ENCODE measurements at regions of chr1 and their contacts with region 1.

Region 1: DNA sequence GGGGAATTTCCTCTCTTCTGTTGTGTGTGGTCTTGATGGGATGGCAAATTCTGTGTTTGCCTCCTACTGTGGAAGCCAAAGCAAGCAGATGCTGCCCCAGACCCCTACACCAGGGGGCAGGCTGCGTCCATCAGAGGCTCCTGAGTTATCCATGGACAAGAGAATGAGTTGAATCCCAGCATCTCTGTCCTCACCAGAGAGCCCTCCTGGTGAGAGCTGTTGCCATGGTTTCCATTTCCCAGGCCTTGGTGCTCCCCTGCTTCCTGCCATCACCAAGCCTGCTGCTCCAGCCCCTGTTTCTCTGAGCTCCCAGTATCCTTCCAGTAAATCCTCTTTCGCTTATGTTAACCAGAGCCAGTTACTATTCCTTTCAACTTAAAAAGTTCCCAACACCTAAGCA is 20.4 kb upstream of the GNG12 start:
- DNase-seq: peak; percentile 57
- ATAC-seq: peak; percentile 60
- H3K4me3 Mint-ChIP-seq: no peak overlapping the region
- H3K27ac Mint-ChIP-seq: no peak overlapping the region
- H3K4me1 Mint-ChIP-seq: no peaks in the 10 kb centered on the region
- H3K27me3 Mint-ChIP-seq: peaks cover 14% of the 10 kb centered on the region

Region 2: GRCh38 chr1:68010090-68010489 is 156.4 kb after region 1 on chr1:
- CTCF ChIA-PET with region 1: no interaction called
- POLR2A ChIA-PET with region 1: no interaction called
- intact Hi-C with region 1: loop called (anchors 1 to 10 kb)
- DNase-seq: no peak
- ATAC-seq: no peak
- H3K4me3 Mint-ChIP-seq: no peak overlapping the region
- H3K27ac Mint-ChIP-seq: no peak overlapping the region
- H3K4me1 Mint-ChIP-seq: no peaks in the 10 kb centered on the region
- H3K27me3 Mint-ChIP-seq: peaks cover 3% of the 10 kb centered on the region

Region 3: DNA sequence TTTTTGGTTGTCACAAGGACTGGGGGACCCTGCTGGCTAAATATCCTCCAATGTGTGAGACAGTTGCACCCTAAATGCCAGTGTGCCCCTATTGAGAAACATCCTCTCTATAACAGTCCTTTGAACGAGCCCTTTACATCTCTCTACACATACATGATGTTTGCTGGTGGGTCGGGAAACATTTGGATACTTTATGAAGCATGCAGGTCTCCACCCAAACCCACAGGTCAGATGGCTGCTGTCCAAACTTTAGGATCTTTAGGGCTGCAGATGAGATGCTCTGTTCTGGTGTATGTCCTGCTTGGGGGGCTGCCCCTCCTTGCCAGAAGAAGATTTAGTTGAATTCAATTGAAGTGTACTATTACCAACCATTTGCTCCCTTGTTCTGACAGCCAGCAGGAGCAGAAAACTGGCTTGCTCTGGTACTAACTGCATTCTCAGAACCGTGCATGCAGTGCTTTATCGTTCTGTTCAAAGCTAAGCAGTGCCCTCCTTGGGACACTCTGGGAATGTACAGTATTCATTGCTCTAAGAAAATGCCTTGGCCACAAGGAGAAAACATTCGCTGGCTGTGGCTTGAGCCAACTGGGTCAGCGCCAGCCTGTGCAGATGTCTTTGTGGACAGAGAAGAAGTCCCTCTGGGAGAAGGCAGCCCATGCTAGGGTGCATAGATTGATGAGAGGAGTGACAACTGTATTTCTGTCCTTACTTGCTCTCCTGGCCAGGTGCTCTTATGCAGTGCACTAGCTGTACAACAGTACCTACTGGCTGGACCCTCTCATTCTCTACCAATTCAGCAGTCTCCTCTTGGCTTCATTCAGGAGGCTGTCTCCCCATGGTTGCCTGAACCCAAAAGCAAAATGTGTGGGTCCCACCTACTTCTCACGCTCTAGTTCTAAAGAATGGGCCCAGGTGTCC is 258.1 kb after region 1 on chr1:
- CTCF ChIA-PET with region 1: interaction called, 5 read pairs
- POLR2A ChIA-PET with region 1: no interaction called
- intact Hi-C with region 1: loop called (anchors 1 to 5 kb)
- DNase-seq: no peak
- ATAC-seq: no peak
- H3K4me3 Mint-ChIP-seq: no peak overlapping the region
- H3K27ac Mint-ChIP-seq: no peak overlapping the region
- H3K4me1 Mint-ChIP-seq: peaks cover 1% of the 10 kb centered on the region
- H3K27me3 Mint-ChIP-seq: peaks cover 7% of the 10 kb centered on the region

Region 4: GRCh38 chr1:68346188-68346808 is 492.6 kb after region 1 on chr1:
- CTCF ChIA-PET with region 1: interaction called, 4 read pairs
- POLR2A ChIA-PET with region 1: no interaction called
- intact Hi-C with region 1: loop called in 1 of 2 experiments (anchors 2 kb)
- DNase-seq: no peak
- ATAC-seq: no peak
- H3K4me3 Mint-ChIP-seq: no peak overlapping the region
- H3K27ac Mint-ChIP-seq: no peak overlapping the region
- H3K4me1 Mint-ChIP-seq: no peaks in the 10 kb centered on the region
- H3K27me3 Mint-ChIP-seq: peaks cover 2% of the 10 kb centered on the region

Region 5: GRCh38 chr1:69737527-69738185 is 1884.0 kb after region 1 on chr1:
- CTCF ChIA-PET with region 1: no interaction called
- POLR2A ChIA-PET with region 1: no interaction called
- intact Hi-C with region 1: loop called in 1 of 2 experiments (anchors 5 kb)
- DNase-seq: peak; percentile 9
- ATAC-seq: no peak
- H3K4me3 Mint-ChIP-seq: no peak overlapping the region
- H3K27ac Mint-ChIP-seq: no peak overlapping the region
- H3K4me1 Mint-ChIP-seq: no peaks in the 10 kb centered on the region
- H3K27me3 Mint-ChIP-seq: no peaks in the 10 kb centered on the region